ENCODE measurements at regions of chr10 and their contacts with region 1.

Region 1: GRCh38 chr10:22988581-22989360 is 60.9 kb downstream of the ARMC3 start:
- H3K4me3 ChIP-seq: no peak overlapping the region
- H3K27ac ChIP-seq: no peak overlapping the region
- H3K4me1 ChIP-seq: no peaks in the 10 kb centered on the region
- CTCF ChIP-seq: no peak; the same call in 1 of the 2 replicates

Region 2: GRCh38 chr10:21993360-21994001 is 995.3 kb before region 1 on chr10:
- CTCF ChIA-PET with region 1: interaction called, 20 read pairs
- POLR2A ChIA-PET with region 1: interaction called, 8 read pairs
- H3K4me3 ChIP-seq: no peak overlapping the region
- H3K27ac ChIP-seq: no peak overlapping the region
- H3K4me1 ChIP-seq: peaks cover 6% of the 10 kb centered on the region
- CTCF ChIP-seq: 0 out of 2 replicates have a peak, but pooled peaks have one; percentile 26

Region 3: DNA sequence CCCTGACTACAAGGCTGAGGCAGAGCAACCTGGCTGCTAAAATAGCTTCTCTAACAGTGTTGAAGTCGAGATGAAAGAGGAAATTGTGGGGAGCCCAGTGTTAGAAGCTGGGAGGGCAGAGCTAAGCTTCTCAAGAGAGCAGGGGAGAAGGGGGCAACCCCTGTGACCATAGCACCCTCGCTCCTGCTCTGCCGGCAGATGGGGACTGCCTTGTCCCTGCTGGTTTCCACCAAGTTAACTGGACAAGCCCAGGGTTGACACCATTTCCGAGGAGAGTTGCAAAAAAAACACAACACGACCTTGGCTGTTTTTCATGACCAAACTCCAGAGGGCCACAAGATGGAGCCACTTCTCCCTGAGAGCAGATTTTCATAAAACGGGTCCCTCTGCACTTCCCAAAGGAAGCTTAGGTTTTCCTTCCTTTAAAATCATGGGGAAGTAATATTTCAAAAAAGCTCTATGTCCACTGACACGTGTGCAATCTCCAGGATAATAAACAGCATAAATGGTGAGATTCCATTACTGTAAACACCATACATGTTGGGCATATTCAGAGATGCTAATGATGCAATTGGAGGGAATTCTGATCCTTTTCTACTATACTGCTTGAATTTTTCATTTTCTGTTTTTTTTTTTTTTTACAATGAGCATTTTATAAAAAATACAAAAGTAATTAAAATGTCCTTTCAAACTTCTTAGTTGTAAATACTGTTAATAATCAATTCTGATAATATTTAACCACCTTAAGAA is 414.8 kb before region 1 on chr10:
- CTCF ChIA-PET with region 1: interaction called, 23 read pairs
- POLR2A ChIA-PET with region 1: no interaction called
- H3K4me3 ChIP-seq: no peak overlapping the region
- H3K27ac ChIP-seq: no peak overlapping the region
- H3K4me1 ChIP-seq: no peaks in the 10 kb centered on the region
- CTCF ChIP-seq: no peak

Region 4: DNA sequence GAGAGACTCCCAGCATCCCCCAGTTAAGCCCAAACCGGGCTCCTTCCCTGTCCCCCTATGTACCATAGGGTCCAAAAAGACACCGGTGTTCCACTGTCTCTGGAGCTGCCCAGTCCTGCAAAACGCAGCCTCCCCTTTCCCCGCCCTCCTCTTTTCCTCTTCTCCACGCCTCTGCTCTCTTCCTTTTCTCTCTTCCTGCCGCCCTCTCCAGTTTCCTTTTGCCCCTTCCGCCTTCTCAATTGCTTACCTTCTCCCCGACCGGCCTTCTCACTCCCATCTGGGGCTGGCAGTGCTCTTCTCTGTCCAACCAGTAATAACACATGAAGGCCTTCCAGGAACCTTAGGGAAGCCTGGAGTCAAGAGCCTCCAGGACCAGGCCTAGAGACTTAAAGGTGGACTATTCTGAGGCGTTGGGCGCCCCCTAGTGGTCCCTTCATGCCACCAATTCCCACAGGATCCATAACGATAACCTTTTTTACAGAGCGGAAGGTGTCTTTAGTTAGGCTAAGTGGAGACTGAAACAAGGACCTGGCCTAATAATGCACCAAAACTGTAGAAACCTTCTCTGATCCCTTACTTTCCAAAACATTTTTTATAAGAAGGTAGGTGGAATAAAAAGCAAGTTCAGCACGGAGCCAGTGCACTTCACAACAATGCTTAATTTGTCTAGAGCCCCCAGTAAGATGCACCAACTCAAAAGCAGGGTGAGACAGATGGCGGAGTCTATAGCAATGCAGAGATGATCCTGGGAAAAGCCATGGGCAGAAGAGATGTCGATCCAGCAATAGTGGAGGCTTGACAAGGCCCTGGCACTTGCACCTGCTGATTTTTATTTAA is 79.4 kb after region 1 on chr10:
- CTCF ChIA-PET with region 1: interaction called, 15 read pairs
- POLR2A ChIA-PET with region 1: no interaction called
- H3K4me3 ChIP-seq: no peak overlapping the region
- H3K27ac ChIP-seq: no peak overlapping the region
- H3K4me1 ChIP-seq: no peaks in the 10 kb centered on the region
- CTCF ChIP-seq: peak; percentile 46; the same call in 1 of the 2 replicates

Measured in HEK293 (cell line).